CD8-positive, alpha-beta T cell (primary cell): ENCODE measurements at regions of chr2 and their contacts with region 1.

Region 1: GRCh38 chr2:47782671-47783485 is at the start of gene MSH6:
- DNase-seq: peak; percentile 77 to 95 (median 87)
- ATAC-seq: peak; percentile 93
- H3K4me3 ChIP-seq: peak within 1 kb of the TSS; percentile 76 to 100
- H3K4me3 Mint-ChIP-seq: peak within 1 kb of the TSS; percentile 89
- H3K27ac ChIP-seq: peak within 1 kb of the TSS; percentile 80 to 92
- H3K27ac Mint-ChIP-seq: peak within 1 kb of the TSS; percentile 89
- H3K4me1 ChIP-seq: peaks cover 25% of the 10 kb centered on the region
- H3K4me1 Mint-ChIP-seq: peaks cover 37% of the 10 kb centered on the region
- H3K27me3 ChIP-seq: no peaks in the 10 kb centered on the region
- H3K27me3 Mint-ChIP-seq: no peaks in the 10 kb centered on the region
- CTCF ChIP-seq: no peak
- total RNA-seq, gene MSH6: 36.3 to 37.7 TPM

Region 2: GRCh38 chr2:46915811-46916630 is 866.9 kb before region 1 on chr2:
- CTCF ChIA-PET with region 1: no interaction called
- POLR2A ChIA-PET with region 1: no interaction called
- intact Hi-C with region 1: loop called (anchors 2 to 5 kb)
- DNase-seq: peak; percentile 60 to 92 (median 81)
- ATAC-seq: peak; percentile 80
- H3K4me3 ChIP-seq: peak overlapping the region; percentile 87 to 99
- H3K4me3 Mint-ChIP-seq: peak overlapping the region; percentile 89
- H3K27ac ChIP-seq: peak overlapping the region; percentile 86 to 91
- H3K27ac Mint-ChIP-seq: peak overlapping the region; percentile 85
- H3K4me1 ChIP-seq: peaks cover 39% of the 10 kb centered on the region
- H3K4me1 Mint-ChIP-seq: peaks cover 53% of the 10 kb centered on the region
- H3K27me3 ChIP-seq: no peaks in the 10 kb centered on the region
- H3K27me3 Mint-ChIP-seq: no peaks in the 10 kb centered on the region
- CTCF ChIP-seq: no peak

Region 3: DNA sequence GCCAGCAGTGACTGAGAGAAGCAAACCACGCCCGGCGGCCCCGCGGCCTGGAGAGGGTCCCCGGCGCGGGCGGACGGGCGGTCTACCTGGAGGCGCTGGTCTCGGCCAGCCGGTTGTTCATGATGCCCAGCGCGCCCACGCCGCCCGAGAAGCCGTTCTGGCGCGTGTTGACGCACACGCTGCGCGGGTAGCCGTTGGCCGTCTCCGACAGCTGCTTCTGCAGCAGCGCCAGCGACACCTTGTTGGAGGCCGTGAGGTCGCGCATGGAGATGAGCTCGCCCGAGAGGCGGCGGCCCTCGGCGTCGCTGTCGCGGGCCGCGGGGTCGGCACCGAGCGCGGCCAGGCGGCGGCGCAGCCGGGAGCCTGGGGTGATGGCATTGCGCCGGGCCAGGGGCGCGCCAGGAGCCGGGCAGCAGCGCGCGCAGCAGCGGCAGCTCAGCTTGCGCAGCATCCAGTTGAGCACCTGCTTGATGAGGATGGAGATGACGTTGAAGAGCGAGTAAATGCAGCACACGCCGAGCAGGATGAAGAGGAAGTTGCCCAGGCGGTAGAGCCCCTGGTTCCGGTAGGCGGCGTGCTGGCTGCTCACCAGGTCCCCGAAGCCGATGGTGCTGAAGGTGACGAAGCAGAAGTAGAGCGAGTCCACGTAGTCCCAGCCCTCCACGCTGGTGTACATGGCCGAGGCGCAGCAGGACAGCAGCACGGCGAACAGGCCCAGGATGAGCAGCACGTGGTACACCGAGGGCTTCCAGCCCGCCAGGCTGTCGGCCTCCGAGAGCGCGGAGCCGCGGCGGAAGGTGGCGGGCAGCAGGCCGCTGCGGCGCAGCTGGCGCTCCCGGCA is 261.8 kb before region 1 on chr2:
- CTCF ChIA-PET with region 1: no interaction called
- POLR2A ChIA-PET with region 1: no interaction called
- intact Hi-C with region 1: loop called in 1 of 2 experiments (anchors 5 kb)
- DNase-seq: peak; percentile 46 to 86 (median 72)
- ATAC-seq: peak; percentile 87
- H3K4me3 ChIP-seq: peak overlapping the region; percentile 52 to 73
- H3K4me3 Mint-ChIP-seq: peak overlapping the region; percentile 89
- H3K27ac ChIP-seq: peak overlapping the region; percentile 37 to 66
- H3K27ac Mint-ChIP-seq: peak overlapping the region; percentile 90
- H3K4me1 ChIP-seq: peaks cover 14% of the 10 kb centered on the region
- H3K4me1 Mint-ChIP-seq: peaks cover 16% of the 10 kb centered on the region
- H3K27me3 ChIP-seq: no peaks in the 10 kb centered on the region
- H3K27me3 Mint-ChIP-seq: peaks cover 2% of the 10 kb centered on the region
- CTCF ChIP-seq: peak; percentile 25

Region 4: GRCh38 chr2:47798631-47799030 is 15.8 kb after region 1 on chr2:
- CTCF ChIA-PET with region 1: no interaction called
- POLR2A ChIA-PET with region 1: interaction called, 3 read pairs
- intact Hi-C with region 1: loop called in 1 of 2 experiments (anchors 2 kb)
- DNase-seq: no peak
- ATAC-seq: no peak
- H3K4me3 ChIP-seq: no peak overlapping the region
- H3K4me3 Mint-ChIP-seq: no peak overlapping the region
- H3K27ac ChIP-seq: no peak overlapping the region
- H3K27ac Mint-ChIP-seq: peak overlapping the region; percentile 37
- H3K4me1 ChIP-seq: no peaks in the 10 kb centered on the region
- H3K4me1 Mint-ChIP-seq: peaks cover 2% of the 10 kb centered on the region
- H3K27me3 ChIP-seq: no peaks in the 10 kb centered on the region
- H3K27me3 Mint-ChIP-seq: no peaks in the 10 kb centered on the region
- CTCF ChIP-seq: no peak

Region 5: GRCh38 chr2:47906157-47907038 is 123.5 kb after region 1 on chr2 and contains the start of gene FBXO11:
- CTCF ChIA-PET with region 1: no interaction called
- POLR2A ChIA-PET with region 1: interaction called, 3 read pairs
- intact Hi-C with region 1: loop called (anchors 1 kb)
- DNase-seq: peak; percentile 91 to 99 (median 94)
- ATAC-seq: peak; percentile 80
- H3K4me3 ChIP-seq: peak within 1 kb of the TSS; percentile 80 to 92
- H3K4me3 Mint-ChIP-seq: peak within 1 kb of the TSS; percentile 76
- H3K27ac ChIP-seq: peak within 1 kb of the TSS; percentile 81 to 97
- H3K27ac Mint-ChIP-seq: peak within 1 kb of the TSS; percentile 80
- H3K4me1 ChIP-seq: peaks cover 30% of the 10 kb centered on the region
- H3K4me1 Mint-ChIP-seq: peaks cover 40% of the 10 kb centered on the region
- H3K27me3 ChIP-seq: no peaks in the 10 kb centered on the region
- H3K27me3 Mint-ChIP-seq: no peaks in the 10 kb centered on the region
- CTCF ChIP-seq: no peak
- total RNA-seq, gene FBXO11: 144 to 146 TPM

Region 6: GRCh38 chr2:48420512-48421197 is 637.8 kb after region 1 on chr2:
- CTCF ChIA-PET with region 1: no interaction called
- POLR2A ChIA-PET with region 1: no interaction called
- intact Hi-C with region 1: loop called (anchors 5 kb)
- DNase-seq: peak; percentile 82 to 97 (median 90)
- ATAC-seq: peak; percentile 89
- H3K4me3 ChIP-seq: no peak overlapping the region
- H3K4me3 Mint-ChIP-seq: peak overlapping the region; percentile 40
- H3K27ac ChIP-seq: no peak overlapping the region
- H3K27ac Mint-ChIP-seq: peak overlapping the region; percentile 3
- H3K4me1 ChIP-seq: peaks cover 21% of the 10 kb centered on the region
- H3K4me1 Mint-ChIP-seq: peaks cover 35% of the 10 kb centered on the region
- H3K27me3 ChIP-seq: no peaks in the 10 kb centered on the region
- H3K27me3 Mint-ChIP-seq: no peaks in the 10 kb centered on the region
- CTCF ChIP-seq: peak; percentile 99